ENCODE measurements at regions of chrX and their contacts with region 1.

Region 1: GRCh38 chrX:130539721-130540321 is 138.0 kb downstream of the RBMX2 start:
- DNase-seq: peak; percentile 20 to 22
- H3K4me3 ChIP-seq: no peak overlapping the region
- H3K27ac ChIP-seq: no peak overlapping the region
- H3K4me1 ChIP-seq: no peaks in the 10 kb centered on the region
- H3K27me3 ChIP-seq: no peaks in the 10 kb centered on the region
- CTCF ChIP-seq: peak; percentile 17 to 44 (median 37)
- POLR2A ChIP-seq: no peak

Region 2: DNA sequence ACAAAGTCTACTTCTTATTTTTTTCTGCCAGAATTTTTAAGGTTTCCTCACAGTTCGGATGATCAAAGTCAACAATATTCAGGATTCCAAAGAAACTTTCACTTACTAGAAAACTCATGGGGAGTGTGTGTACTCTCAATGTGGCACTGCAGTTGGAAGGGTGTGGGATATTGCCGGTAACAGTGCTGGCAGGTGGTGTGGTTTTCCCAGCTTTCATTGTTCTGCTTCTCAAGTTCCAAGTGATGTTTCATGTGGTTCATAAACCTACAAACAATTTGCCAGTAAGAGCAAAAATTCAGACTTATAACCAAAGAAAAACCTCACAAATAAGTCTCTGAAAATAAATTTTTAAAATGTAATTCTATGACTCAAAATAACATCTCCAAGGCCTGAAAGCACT is 310.9 kb before region 1 on chrX:
- intact Hi-C with region 1: no loop called
- DNase-seq: no peak
- H3K4me3 ChIP-seq: no peak overlapping the region
- H3K27ac ChIP-seq: no peak overlapping the region
- H3K4me1 ChIP-seq: no peaks in the 10 kb centered on the region
- H3K27me3 ChIP-seq: no peaks in the 10 kb centered on the region
- CTCF ChIP-seq: no peak
- POLR2A ChIP-seq: no peak

Region 3: GRCh38 chrX:130426531-130426930 is 113.3 kb before region 1 on chrX:
- intact Hi-C with region 1: no loop called
- DNase-seq: no peak
- H3K4me3 ChIP-seq: no peak overlapping the region
- H3K27ac ChIP-seq: no peak overlapping the region
- H3K4me1 ChIP-seq: no peaks in the 10 kb centered on the region
- H3K27me3 ChIP-seq: no peaks in the 10 kb centered on the region
- CTCF ChIP-seq: no peak
- POLR2A ChIP-seq: no peak

Region 4: GRCh38 chrX:130746709-130747342 is 207.0 kb after region 1 on chrX:
- intact Hi-C with region 1: no loop called
- DNase-seq: no peak
- H3K4me3 ChIP-seq: no peak overlapping the region
- H3K27ac ChIP-seq: no peak overlapping the region
- H3K4me1 ChIP-seq: no peaks in the 10 kb centered on the region
- H3K27me3 ChIP-seq: no peaks in the 10 kb centered on the region
- CTCF ChIP-seq: no peak
- POLR2A ChIP-seq: no peak

Region 5: DNA sequence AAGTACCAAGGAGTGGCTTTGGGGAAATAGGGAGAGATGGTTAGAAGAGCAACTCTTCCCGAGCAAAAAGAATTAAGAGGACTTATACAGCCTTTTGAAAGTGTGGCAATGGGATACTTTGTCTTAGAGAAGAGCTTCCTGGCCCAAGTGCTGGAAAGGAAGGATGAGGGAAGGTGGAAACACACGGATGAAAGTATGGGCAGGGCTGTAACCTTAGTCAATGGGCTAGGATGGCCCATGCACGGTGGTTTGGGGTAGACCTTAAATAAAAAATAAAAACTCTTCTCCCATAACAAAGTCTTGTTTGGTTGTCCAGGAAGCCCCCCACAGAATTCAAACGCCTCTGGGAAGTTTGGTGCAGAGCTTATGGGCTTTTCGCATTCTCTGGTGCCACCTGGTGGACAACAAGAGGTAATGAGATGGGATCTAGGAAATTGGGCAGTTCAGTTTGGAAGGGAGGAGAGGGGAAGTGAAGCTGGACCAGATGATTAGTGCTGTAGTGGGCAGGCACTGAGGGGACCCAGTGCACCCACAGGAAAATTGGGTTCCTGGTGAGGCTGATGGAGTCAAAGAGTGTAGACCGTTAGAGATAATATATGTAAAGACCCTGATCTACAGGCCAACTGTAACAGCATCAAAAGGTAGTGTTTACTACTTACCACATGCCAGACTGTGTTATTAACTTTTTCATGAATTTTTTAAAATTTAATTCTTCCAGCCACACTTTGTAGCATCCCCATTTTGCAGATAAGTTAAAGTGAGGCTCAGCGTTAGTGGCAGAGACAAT is 377.0 kb after region 1 on chrX:
- intact Hi-C with region 1: loop called (anchors 5 kb)
- DNase-seq: peak; percentile 26 to 33
- H3K4me3 ChIP-seq: no peak overlapping the region
- H3K27ac ChIP-seq: no peak overlapping the region
- H3K4me1 ChIP-seq: no peaks in the 10 kb centered on the region
- H3K27me3 ChIP-seq: no peaks in the 10 kb centered on the region
- CTCF ChIP-seq: peak; percentile 66 to 69 (median 68)
- POLR2A ChIP-seq: no peak